ENCODE measurements at regions of chr4 and their contacts with region 1.

Region 1: DNA sequence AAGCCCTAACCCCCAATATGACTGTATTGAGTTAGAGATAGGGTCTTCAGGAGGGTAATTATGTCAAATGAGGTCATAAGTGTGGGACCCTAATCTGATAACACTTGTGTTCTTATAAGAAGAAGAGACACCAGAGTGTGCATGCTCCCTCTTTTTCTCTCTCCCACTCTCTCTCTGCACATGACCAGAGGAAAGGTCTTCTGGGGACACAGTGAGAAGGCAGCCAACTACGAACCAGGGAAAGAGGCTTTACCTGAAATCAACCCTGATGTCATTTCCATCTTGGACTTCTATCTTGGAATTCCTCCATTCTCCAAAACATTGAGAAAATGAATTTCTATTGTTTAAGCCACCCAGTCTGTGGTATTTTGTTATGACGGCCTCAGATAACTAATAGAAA is 97.2 kb upstream of the MAD2L1 start:
- DNase-seq: no peak
- ATAC-seq: peak; percentile 48

Region 2: DNA sequence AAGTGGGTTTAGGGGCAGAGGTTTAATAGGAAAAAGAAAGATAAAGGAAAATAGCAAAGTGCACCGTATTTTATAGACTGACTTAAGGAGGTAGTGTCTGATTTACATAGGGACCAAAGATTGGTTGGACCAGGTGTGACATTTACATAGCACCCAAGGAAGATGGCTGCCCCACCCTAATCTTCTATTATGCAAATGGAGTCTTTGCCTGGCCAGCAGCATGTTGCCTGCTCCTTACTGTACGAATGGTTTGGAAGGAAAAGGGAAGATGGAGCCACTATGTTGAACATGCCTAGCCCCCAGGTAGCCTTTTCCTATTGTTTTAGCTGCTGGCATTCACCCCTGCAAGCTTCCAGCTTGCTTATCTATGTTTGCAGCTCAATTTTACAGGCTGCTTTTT is 389.1 kb before region 1 on chr4:
- intact Hi-C with region 1: no loop called
- DNase-seq: no peak
- ATAC-seq: no peak

Region 3: DNA sequence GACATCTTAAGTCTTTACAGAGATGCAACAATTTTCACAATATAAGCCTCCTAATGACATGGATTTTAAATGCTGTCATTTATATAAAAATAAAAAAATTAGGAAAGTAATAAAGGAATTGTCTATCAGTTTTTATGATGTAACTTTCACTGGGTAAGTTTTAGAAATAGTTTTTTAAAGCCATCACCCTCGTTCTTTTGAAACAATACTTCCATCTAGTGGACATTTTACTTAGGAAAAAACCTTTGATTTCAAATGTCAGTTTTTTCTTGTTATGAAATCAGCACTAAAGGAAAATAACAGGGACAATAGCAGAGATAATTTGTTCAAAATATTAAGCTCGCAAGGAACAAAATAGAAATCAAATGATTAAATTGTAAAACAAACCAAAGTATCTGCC is 932.7 kb after region 1 on chr4:
- intact Hi-C with region 1: loop called (anchors 5 kb)
- DNase-seq: no peak
- ATAC-seq: no peak

Measured in Right ventricle myocardium superior (tissue), 1 donor.